A549 (cell line): ENCODE measurements at regions of chr11 and their contacts with region 1.

Region 1: DNA sequence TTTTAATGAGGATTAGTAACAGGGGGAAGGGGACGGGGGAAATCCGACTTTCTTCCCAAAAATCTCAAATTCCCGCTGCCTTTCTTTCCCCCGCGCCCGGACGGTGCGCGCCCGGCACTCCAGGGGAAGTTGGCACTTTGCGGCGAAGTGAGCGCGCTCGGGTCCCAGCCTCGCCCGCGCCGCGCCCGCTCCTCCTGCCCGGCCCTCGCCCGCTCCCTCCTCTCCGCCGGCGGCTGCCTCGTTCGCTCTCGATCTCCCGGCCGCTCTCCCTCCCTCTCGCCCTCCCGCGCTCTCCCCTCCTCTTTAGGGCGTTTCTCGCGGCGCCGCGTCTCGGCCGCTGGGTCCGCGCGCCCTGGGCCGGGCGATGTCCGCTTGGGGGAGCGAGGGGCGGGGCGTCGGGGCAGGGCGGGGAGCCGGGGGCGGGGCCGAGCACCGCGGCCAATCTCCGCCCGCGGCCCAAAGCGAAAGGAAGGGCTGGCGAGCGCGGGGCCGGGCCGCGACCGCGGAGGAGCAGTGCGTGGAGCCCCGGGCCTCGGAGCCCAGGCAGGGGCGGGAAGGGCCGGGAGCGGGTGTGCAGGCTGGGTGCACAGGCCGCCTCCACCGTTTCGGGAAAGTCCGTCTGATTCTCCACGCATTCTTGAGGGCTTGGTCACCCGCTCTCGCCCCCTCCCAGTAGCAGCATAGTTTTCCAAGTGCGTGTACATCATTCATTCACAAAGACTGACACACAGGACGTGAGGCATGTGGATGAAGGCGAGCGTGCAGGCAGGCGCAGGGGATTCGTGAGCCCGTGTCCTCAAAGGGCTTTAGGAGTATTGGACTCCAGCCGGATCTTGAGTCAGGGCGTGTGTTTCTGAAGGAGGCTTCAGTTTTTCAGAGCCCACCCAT is 65.1 kb downstream of the ETS1 start:
- DNase-seq: peak; percentile 62 to 87
- ATAC-seq: peak; percentile 89 to 92
- H3K4me3 ChIP-seq: peak overlapping the region; percentile 60
- H3K27ac ChIP-seq: peak overlapping the region; percentile 83 to 94
- H3K4me1 ChIP-seq: peaks cover 47% of the 10 kb centered on the region
- CTCF ChIP-seq: no peak
- EP300 ChIP-seq: no peak
- POLR2A ChIP-seq: peak; percentile 91
- RAD21 ChIP-seq: peak in 1 of 2 experiments; percentile 2; a peak in 1 of 5 replicates

Region 2: DNA sequence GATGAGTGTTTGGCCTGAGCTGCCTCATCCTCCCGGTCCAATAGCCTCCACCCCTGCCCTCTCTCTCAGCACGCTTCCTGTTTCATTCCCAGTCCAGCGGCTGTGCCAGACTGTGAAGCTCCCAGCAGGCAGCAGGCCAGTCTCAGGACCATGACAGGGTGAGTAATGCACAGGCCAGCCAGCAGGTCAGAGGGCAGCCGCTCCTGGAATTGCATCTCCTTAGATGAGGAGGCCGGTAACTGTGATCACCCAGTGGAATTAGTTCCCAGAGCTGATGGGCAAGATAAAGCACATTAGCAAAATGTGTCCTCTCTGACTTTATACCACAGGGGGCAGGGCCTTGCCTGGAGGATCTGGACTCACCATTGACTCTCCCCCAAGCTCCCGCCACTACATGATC is 186.1 kb before region 1 on chr11:
- CTCF ChIA-PET with region 1: no interaction called
- POLR2A ChIA-PET with region 1: no interaction called
- DNase-seq: peak in 1 of 2 experiments; percentile 41
- ATAC-seq: peak; percentile 62 to 87
- H3K4me3 ChIP-seq: no peak overlapping the region
- H3K27ac ChIP-seq: 0 out of 6 replicates have a peak overlapping the region, but pooled peaks of 1 of the 2 experiments have one; percentile 19
- H3K4me1 ChIP-seq: no peaks in the 10 kb centered on the region
- CTCF ChIP-seq: no peak
- EP300 ChIP-seq: no peak
- POLR2A ChIP-seq: no peak
- RAD21 ChIP-seq: no peak

Region 3: DNA sequence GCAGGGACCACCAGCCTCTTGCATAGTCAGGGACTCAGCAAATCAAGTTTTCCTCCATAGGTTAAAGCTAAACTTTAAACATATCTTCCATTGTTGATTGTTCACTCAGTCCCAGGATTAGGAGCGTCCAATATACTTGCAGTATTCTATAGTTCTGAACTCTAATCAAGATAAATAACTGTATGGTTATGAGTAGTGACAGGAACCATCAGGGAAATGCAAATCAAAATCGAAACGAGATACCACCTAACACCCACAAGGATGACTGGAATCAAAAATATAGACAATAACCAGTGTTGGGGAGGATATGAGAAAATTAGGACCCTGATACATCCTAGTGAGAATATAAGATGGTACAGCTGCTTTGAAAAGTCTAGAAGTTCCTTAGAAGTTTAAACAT is 124.9 kb before region 1 on chr11:
- CTCF ChIA-PET with region 1: no interaction called
- POLR2A ChIA-PET with region 1: interaction called, 11 read pairs
- DNase-seq: no peak
- ATAC-seq: no peak
- H3K4me3 ChIP-seq: no peak overlapping the region
- H3K27ac ChIP-seq: no peak overlapping the region
- H3K4me1 ChIP-seq: no peaks in the 10 kb centered on the region
- CTCF ChIP-seq: no peak
- EP300 ChIP-seq: no peak
- POLR2A ChIP-seq: no peak
- RAD21 ChIP-seq: no peak

Region 4: DNA sequence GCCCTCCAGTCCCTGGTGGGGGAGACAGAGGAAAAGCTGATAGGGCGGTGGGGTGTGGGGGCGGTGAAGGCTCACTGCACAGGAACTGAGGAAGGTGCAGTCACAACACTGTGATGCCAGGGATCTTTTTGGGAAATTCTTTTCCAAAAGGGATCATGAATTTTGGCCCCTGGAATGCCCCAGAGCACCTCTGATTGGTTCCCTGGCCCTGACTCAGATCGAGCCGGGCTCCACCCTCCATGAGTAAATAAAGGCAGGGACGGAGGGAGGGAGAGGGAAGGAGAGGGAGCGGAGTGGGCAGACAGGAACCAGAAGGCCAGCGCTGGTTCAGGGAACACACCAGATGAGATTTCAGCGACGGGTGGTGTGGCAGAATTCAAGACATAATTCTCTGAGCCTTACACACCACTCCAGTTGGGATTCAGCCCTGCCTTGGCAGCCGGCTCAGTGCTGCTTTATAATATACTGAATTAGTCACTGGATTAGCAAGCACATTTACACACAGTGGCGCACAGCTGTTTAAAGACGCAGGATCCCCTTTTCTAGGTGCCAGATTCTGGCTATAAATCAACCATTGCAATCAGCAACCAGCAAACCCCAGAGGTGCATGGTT is 15.2 kb before region 1 on chr11:
- CTCF ChIA-PET with region 1: interaction called, 11 read pairs
- POLR2A ChIA-PET with region 1: interaction called, 25 read pairs
- DNase-seq: peak; percentile 72 to 86
- ATAC-seq: peak; percentile 92
- H3K4me3 ChIP-seq: peak overlapping the region; percentile 39
- H3K27ac ChIP-seq: peak overlapping the region; percentile 93 to 97
- H3K4me1 ChIP-seq: peaks cover 88% of the 10 kb centered on the region
- CTCF ChIP-seq: no peak
- EP300 ChIP-seq: no peak
- POLR2A ChIP-seq: peak; percentile 74
- RAD21 ChIP-seq: 0 out of 5 replicates have a peak, but pooled peaks have one; percentile 2 to 11